ENCODE measurements at regions of chr13 and their contacts with region 1.

Region 1: GRCh38 chr13:57018915-57019314 is 121.8 kb upstream of the PRR20A start:
- ATAC-seq: no peak
- H3K4me3 ChIP-seq: no peak overlapping the region
- H3K27ac ChIP-seq: no peak overlapping the region
- H3K4me1 ChIP-seq: no peaks in the 10 kb centered on the region

Region 2: GRCh38 chr13:56923626-56924140 is 95.2 kb before region 1 on chr13:
- in situ Hi-C with region 1: no loop called
- ATAC-seq: no peak
- H3K4me3 ChIP-seq: no peak overlapping the region
- H3K27ac ChIP-seq: no peak overlapping the region
- H3K4me1 ChIP-seq: no peaks in the 10 kb centered on the region

Region 3: GRCh38 chr13:56980856-56981255 is 38.1 kb before region 1 on chr13:
- in situ Hi-C with region 1: loop called in 1 of 9 experiments (anchors 5 kb)
- ATAC-seq: no peak
- H3K4me3 ChIP-seq: no peak overlapping the region
- H3K27ac ChIP-seq: no peak overlapping the region
- H3K4me1 ChIP-seq: no peaks in the 10 kb centered on the region

Region 4: GRCh38 chr13:57992416-57992815 is 973.5 kb after region 1 on chr13:
- in situ Hi-C with region 1: no loop called
- ATAC-seq: no peak
- H3K4me3 ChIP-seq: no peak overlapping the region
- H3K27ac ChIP-seq: no peak overlapping the region
- H3K4me1 ChIP-seq: no peaks in the 10 kb centered on the region

Measured in motor neuron (in vitro differentiated cells).